Ascending aorta (tissue), 2 donors: ENCODE measurements at regions of chr19 and their contacts with region 1.

Region 1: GRCh38 chr19:1275260-1275975 is at the start of gene FAM174C:
- DNase-seq: peak; percentile 75 to 96
- H3K4me3 ChIP-seq: peak within 1 kb of the TSS; percentile 79 to 86
- H3K27ac ChIP-seq: peak within 1 kb of the TSS; percentile 94 to 99
- H3K4me1 ChIP-seq: peaks cover 32 to 51% of the 10 kb centered on the region in 2 donors
- H3K27me3 ChIP-seq: no peaks in the 10 kb centered on the region
- CTCF ChIP-seq: no peak
- total RNA-seq, gene FAM174C: 156 TPM

Region 2: GRCh38 chr19:1260636-1261537 is 14.5 kb before region 1 on chr19:
- intact Hi-C with region 1: no loop called
- DNase-seq: peak; percentile 84 to 98
- H3K4me3 ChIP-seq: peak overlapping the region; percentile 76 to 83
- H3K27ac ChIP-seq: peak overlapping the region; percentile 96 to 99
- H3K4me1 ChIP-seq: peaks cover 25 to 54% of the 10 kb centered on the region in 2 donors
- H3K27me3 ChIP-seq: no peaks in the 10 kb centered on the region
- CTCF ChIP-seq: no peak

Region 3: GRCh38 chr19:1355568-1356507 is 80.4 kb after region 1 on chr19:
- intact Hi-C with region 1: loop called (anchors 1 kb)
- DNase-seq: no peak
- H3K4me3 ChIP-seq: peak overlapping the region; percentile 85 to 98
- H3K27ac ChIP-seq: peak overlapping the region; percentile 88 to 90
- H3K4me1 ChIP-seq: peaks cover 3 to 25% of the 10 kb centered on the region in 2 donors
- H3K27me3 ChIP-seq: no peaks in the 10 kb centered on the region
- CTCF ChIP-seq: no peak

Region 4: GRCh38 chr19:1406774-1407499 is 131.5 kb after region 1 on chr19:
- intact Hi-C with region 1: loop called (anchors 2 kb)
- DNase-seq: peak; percentile 95 to 99
- H3K4me3 ChIP-seq: peak overlapping the region; percentile 41 to 75
- H3K27ac ChIP-seq: peak overlapping the region; percentile 55 to 61
- H3K4me1 ChIP-seq: peaks cover 31 to 37% of the 10 kb centered on the region in 2 donors
- H3K27me3 ChIP-seq: no peaks in the 10 kb centered on the region
- CTCF ChIP-seq: peak in 1 of 3 experiments; percentile 17

Region 5: DNA sequence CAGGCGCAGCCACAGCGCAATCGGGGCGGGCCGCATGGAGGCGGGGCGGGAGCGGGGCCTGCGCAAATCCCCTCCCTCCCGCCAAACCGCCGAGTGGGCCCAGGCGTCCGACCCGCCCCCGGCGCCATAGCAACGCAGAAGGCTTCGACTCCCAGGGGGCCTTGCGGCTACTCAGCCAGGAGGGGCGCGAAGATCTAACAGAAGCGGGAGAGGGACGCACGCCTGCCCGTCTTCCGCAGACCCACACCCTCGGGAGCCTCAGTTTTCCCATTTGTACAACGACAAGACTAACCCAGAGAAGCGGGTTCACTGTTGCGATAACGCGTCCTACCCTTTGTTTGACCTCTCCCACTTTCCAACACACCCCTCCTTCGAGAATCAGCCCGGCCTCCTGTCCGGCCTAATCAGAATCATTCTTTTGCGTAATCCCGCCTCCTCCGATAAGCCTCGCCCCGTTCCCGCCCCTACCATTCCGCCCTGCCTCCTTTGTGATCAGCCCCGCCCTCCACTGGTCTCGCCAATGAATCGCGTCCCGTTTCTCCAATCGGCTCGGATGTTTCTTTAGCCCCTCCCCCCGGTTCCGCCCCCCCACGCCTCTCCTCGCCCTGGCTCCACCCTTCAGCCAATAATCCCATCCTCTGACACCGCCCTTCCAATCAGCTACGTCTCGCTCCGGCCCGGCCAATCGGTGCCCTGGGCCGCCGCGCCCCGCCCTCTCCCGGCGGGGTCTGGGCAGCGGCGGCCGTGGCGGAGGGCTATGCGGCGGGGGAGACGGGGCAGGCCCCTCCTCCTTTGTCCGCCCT is 215.1 kb after region 1 on chr19 and contains the start of gene PCSK4:
- intact Hi-C with region 1: loop called (anchors 5 kb)
- DNase-seq: peak; percentile 95 to 99
- H3K4me3 ChIP-seq: peak within 1 kb of the TSS; percentile 64 to 82
- H3K27ac ChIP-seq: peak within 1 kb of the TSS; percentile 22 to 67
- H3K4me1 ChIP-seq: peaks cover 8 to 14% of the 10 kb centered on the region in 2 donors
- H3K27me3 ChIP-seq: no peaks in the 10 kb centered on the region
- CTCF ChIP-seq: peak in 1 of 3 experiments; percentile 5
- total RNA-seq, gene PCSK4: 1.5 TPM